ENCODE measurements at regions of chr12 and their contacts with region 1.

Region 1: GRCh38 chr12:56448860-56449621 is at the start of gene TIMELESS:
- DNase-seq: peak; percentile 87
- H3K4me3 Mint-ChIP-seq: peak within 1 kb of the TSS; percentile 92
- H3K27ac Mint-ChIP-seq: peak within 1 kb of the TSS; percentile 85
- H3K4me1 Mint-ChIP-seq: peaks cover 27% of the 10 kb centered on the region
- H3K27me3 Mint-ChIP-seq: no peaks in the 10 kb centered on the region
- total RNA-seq, gene TIMELESS: 44.9 and 45.8 TPM in 2 replicates

Region 2: GRCh38 chr12:56152318-56153033 is 296.6 kb before region 1 on chr12 and contains the start of gene MYL6B:
- intact Hi-C with region 1: no loop called
- DNase-seq: peak; percentile 92
- H3K4me3 Mint-ChIP-seq: peak within 1 kb of the TSS; percentile 88
- H3K27ac Mint-ChIP-seq: peak within 1 kb of the TSS; percentile 99
- H3K4me1 Mint-ChIP-seq: peaks cover 39% of the 10 kb centered on the region
- H3K27me3 Mint-ChIP-seq: no peaks in the 10 kb centered on the region
- total RNA-seq, gene MYL6B: 58.8 and 67.6 TPM in 2 replicates

Region 3: DNA sequence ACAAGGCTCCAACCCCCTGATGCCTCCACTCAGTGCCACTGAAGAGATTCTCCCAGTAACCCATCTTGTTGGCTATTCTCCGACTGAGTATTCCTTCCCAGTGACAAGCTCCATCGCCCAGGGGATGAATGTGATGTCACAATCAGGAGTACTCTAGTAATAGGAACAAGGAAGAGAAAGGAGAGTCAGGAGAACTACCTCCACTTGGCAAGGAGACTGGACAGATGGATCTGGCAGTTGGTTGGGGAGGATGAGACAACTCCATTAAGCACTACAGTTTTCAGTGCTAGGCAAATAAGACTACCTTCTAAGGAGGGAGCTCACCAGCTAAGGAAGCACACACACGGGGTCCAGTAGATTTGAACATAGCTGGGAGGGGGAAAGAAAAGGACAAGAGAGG is 232.6 kb before region 1 on chr12:
- intact Hi-C with region 1: no loop called
- DNase-seq: no peak
- H3K4me3 Mint-ChIP-seq: no peak overlapping the region
- H3K27ac Mint-ChIP-seq: peak overlapping the region; percentile 22
- H3K4me1 Mint-ChIP-seq: peaks cover 24% of the 10 kb centered on the region
- H3K27me3 Mint-ChIP-seq: no peaks in the 10 kb centered on the region

Region 4: GRCh38 chr12:56266693-56267442 is 182.2 kb before region 1 on chr12 and contains the start of gene COQ10A:
- intact Hi-C with region 1: loop called (anchors 5 kb)
- DNase-seq: peak; percentile 84
- H3K4me3 Mint-ChIP-seq: peak within 1 kb of the TSS; percentile 96
- H3K27ac Mint-ChIP-seq: peak within 1 kb of the TSS; percentile 87
- H3K4me1 Mint-ChIP-seq: peaks cover 15% of the 10 kb centered on the region
- H3K27me3 Mint-ChIP-seq: no peaks in the 10 kb centered on the region
- total RNA-seq, gene COQ10A: 17.8 and 18.0 TPM in 2 replicates

Region 5: GRCh38 chr12:56315622-56316473 is 133.2 kb before region 1 on chr12 and contains the start of gene CNPY2:
- intact Hi-C with region 1: loop called (anchors 1 kb)
- DNase-seq: peak; percentile 83
- H3K4me3 Mint-ChIP-seq: peak within 1 kb of the TSS; percentile 98
- H3K27ac Mint-ChIP-seq: peak within 1 kb of the TSS; percentile 96
- H3K4me1 Mint-ChIP-seq: peaks cover 12% of the 10 kb centered on the region
- H3K27me3 Mint-ChIP-seq: no peaks in the 10 kb centered on the region
- total RNA-seq, gene CNPY2: 170 and 172 TPM in 2 replicates

Measured in activated T-helper 1 cell treated with anti-CD3 and anti-CD28 coated beads, Interleukin-12 subunit alpha, Interleukin-12 subunit beta, Interleukin-2, Interleukin-4 antibody, amounts not matched to agents 30 ng/mL and 10 ng/mL and 1 ng/mL, durations not matched to agents 14 hours and 24 hours and 36 hours (primary cell).